ENCODE measurements at regions of chr4 and their contacts with region 1.

Region 1: GRCh38 chr4:15882675-15883086 is 55.9 kb downstream of the FGFBP1 start:
- DNase-seq: no peak
- ATAC-seq: peak; percentile 82
- H3K4me3 Mint-ChIP-seq: no peak overlapping the region
- H3K27ac Mint-ChIP-seq: no peak overlapping the region
- H3K4me1 Mint-ChIP-seq: peaks cover 2% of the 10 kb centered on the region
- H3K27me3 Mint-ChIP-seq: peaks cover 2% of the 10 kb centered on the region
- CTCF ChIP-seq: peak; percentile 85

Region 2: GRCh38 chr4:15213302-15213970 is 669.2 kb before region 1 on chr4:
- CTCF ChIA-PET with region 1: no interaction called
- POLR2A ChIA-PET with region 1: no interaction called
- intact Hi-C with region 1: no loop called
- DNase-seq: no peak
- ATAC-seq: no peak
- H3K4me3 Mint-ChIP-seq: no peak overlapping the region
- H3K27ac Mint-ChIP-seq: no peak overlapping the region
- H3K4me1 Mint-ChIP-seq: no peaks in the 10 kb centered on the region
- H3K27me3 Mint-ChIP-seq: no peaks in the 10 kb centered on the region
- CTCF ChIP-seq: no peak

Region 3: GRCh38 chr4:15729910-15730533 is 152.7 kb before region 1 on chr4:
- CTCF ChIA-PET with region 1: interaction called, 10 read pairs
- POLR2A ChIA-PET with region 1: no interaction called
- intact Hi-C with region 1: loop called (anchors 1 kb)
- DNase-seq: no peak
- ATAC-seq: no peak
- H3K4me3 Mint-ChIP-seq: no peak overlapping the region
- H3K27ac Mint-ChIP-seq: no peak overlapping the region
- H3K4me1 Mint-ChIP-seq: no peaks in the 10 kb centered on the region
- H3K27me3 Mint-ChIP-seq: no peaks in the 10 kb centered on the region
- CTCF ChIP-seq: peak; percentile 45

Region 4: DNA sequence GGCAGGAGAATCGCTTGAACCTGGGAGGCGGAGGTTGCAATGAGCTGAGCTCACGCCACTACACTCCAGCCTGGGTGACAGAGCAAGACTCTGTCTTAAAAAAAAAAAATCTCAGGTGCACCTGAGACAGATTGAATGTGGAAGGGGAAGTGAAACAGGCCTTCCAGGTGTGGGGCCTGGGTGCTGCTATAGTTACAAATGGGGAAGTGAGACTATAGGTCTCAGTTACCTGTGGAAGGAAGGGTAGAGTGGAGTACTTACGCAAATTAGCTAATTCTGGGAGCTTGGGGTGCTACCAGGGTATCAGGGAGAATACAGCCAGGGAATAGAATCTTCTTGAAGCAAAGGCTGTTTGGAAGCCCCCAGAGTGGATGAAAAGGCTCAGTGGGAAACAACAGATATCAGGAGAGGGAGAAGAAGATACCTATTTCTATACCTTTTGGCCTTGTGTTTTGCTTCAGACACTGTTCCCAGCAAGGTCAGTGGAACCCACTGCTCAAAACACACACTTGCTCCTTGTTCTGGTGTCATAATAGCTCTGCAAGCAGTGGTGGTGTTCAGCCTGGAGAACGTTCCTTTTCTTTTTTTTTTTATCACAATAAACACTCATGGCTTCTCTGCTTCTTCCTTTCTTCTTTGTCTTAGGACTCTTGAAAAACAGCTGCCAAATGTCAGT is 97.6 kb before region 1 on chr4:
- CTCF ChIA-PET with region 1: no interaction called
- POLR2A ChIA-PET with region 1: no interaction called
- intact Hi-C with region 1: no loop called
- DNase-seq: no peak
- ATAC-seq: peak; percentile 83
- H3K4me3 Mint-ChIP-seq: peak overlapping the region; percentile 5
- H3K27ac Mint-ChIP-seq: peak overlapping the region; percentile 72
- H3K4me1 Mint-ChIP-seq: peaks cover 64% of the 10 kb centered on the region
- H3K27me3 Mint-ChIP-seq: no peaks in the 10 kb centered on the region
- CTCF ChIP-seq: no peak

Region 5: DNA sequence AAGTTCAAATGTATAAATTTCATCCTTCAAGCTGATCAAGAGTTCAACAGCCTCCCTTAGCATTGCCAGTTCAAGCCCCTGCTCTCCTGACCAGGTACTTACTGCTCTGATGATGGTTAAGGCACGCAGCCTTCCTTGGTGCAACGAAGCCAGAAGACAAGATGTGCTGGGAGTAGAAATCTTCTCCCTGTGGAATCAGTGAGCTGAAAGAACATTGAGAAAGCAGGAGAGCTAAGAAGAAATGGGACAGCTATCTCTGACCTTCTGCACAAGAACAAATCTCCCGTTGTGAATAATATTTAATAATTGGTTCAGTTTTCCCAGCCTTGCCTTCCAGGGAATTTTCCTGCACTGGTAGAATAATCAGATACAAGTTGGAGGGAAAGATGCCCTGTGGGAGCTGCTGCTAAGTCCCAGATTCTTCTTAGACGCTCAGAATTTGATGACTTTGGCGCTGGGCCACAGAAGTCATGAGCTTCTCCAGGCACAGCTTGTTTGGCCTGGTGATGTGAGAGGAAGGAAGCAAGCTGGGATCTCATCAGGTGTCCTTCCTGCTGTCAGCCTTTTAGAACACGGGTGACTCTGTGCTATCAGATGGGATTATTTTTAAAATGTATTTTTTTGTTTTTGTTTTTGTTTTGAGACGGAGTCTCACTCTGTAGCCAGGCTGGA is 26.7 kb before region 1 on chr4:
- CTCF ChIA-PET with region 1: interaction called, 10 read pairs
- POLR2A ChIA-PET with region 1: no interaction called
- intact Hi-C with region 1: no loop called
- DNase-seq: no peak
- ATAC-seq: no peak
- H3K4me3 Mint-ChIP-seq: no peak overlapping the region
- H3K27ac Mint-ChIP-seq: no peak overlapping the region
- H3K4me1 Mint-ChIP-seq: no peaks in the 10 kb centered on the region
- H3K27me3 Mint-ChIP-seq: no peaks in the 10 kb centered on the region
- CTCF ChIP-seq: no peak

Region 6: GRCh38 chr4:15956179-15956850 is 73.6 kb after region 1 on chr4:
- CTCF ChIA-PET with region 1: interaction called, 114 read pairs
- POLR2A ChIA-PET with region 1: no interaction called
- intact Hi-C with region 1: loop called (anchors 1 kb)
- DNase-seq: peak; percentile 56
- ATAC-seq: peak; percentile 100
- H3K4me3 Mint-ChIP-seq: no peak overlapping the region
- H3K27ac Mint-ChIP-seq: no peak overlapping the region
- H3K4me1 Mint-ChIP-seq: peaks cover 5% of the 10 kb centered on the region
- H3K27me3 Mint-ChIP-seq: no peaks in the 10 kb centered on the region
- CTCF ChIP-seq: no peak

Region 7: DNA sequence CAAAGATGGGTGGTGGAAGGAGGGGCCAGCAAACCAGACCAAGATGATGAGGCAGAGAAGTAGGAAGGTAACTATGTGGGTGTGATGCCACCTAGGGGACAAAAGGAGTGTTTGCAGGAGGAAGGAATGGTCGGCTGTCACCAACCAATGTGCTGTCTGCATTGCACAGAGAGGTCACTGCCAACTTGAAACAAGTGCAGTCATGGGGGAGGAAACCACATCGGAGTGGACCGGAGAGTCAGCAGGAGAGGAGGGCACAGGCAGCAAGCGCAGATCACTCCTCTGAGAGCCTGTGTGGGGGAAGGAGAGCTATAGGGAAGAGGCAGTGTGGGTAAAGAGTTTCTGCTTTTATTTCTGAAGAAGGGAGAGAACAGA is 118.8 kb after region 1 on chr4:
- CTCF ChIA-PET with region 1: interaction called, 26 read pairs
- POLR2A ChIA-PET with region 1: no interaction called
- intact Hi-C with region 1: loop called (anchors 1 kb)
- DNase-seq: peak; percentile 24
- ATAC-seq: peak; percentile 88
- H3K4me3 Mint-ChIP-seq: no peak overlapping the region
- H3K27ac Mint-ChIP-seq: no peak overlapping the region
- H3K4me1 Mint-ChIP-seq: no peaks in the 10 kb centered on the region
- H3K27me3 Mint-ChIP-seq: no peaks in the 10 kb centered on the region
- CTCF ChIP-seq: no peak